ENCODE measurements at regions of chr10 and their contacts with region 1.

Region 1: DNA sequence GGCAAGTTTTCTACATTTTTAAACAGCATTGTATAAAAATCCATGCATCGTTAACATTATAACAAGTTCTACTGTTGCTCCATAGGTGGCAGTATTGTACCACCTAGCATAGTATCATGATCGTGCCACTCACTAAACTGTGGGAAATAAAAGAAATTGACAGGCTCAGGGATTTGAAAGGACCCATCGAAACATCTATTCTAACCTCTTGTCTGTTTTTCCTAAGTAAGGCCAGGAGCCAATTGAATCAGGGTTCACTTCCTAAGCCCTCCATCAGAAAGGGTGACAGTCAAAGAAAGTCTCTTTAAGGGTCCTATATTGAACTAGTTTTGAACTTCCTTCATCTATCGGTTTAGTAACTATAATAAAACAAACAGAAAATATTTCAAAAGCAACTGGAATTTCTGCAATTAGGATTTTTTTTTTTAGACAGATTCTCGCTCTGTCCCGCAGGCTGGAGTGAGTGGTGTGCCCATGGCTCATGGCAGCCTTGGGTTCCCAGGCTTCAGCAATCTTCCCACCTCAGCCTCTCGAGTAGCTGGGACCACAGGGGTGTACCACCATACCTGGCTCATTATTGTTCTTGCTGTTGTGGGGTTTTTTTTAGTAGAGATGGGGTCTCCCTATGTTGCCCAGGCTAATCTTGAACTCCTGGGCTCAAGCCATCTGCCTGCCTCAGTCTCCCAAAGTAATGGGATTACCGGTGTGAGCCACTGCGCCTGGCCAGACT is 9.4 kb downstream of the HACD1 start:
- DNase-seq: no peak
- H3K4me3 ChIP-seq: no peak overlapping the region
- H3K27ac ChIP-seq: no peak overlapping the region
- H3K4me1 ChIP-seq: no peaks in the 10 kb centered on the region
- H3K27me3 ChIP-seq: no peaks in the 10 kb centered on the region
- CTCF ChIP-seq: peak; percentile 62 to 91 (median 78)
- POLR2A ChIP-seq: no peak

Region 2: GRCh38 chr10:17368708-17369272 is 239.0 kb before region 1 on chr10:
- intact Hi-C with region 1: no loop called
- DNase-seq: no peak
- H3K4me3 ChIP-seq: no peak overlapping the region
- H3K27ac ChIP-seq: no peak overlapping the region
- H3K4me1 ChIP-seq: no peaks in the 10 kb centered on the region
- H3K27me3 ChIP-seq: no peaks in the 10 kb centered on the region
- CTCF ChIP-seq: no peak
- POLR2A ChIP-seq: no peak

Region 3: GRCh38 chr10:17747883-17748550 is 140.2 kb after region 1 on chr10:
- intact Hi-C with region 1: loop called (anchors 5 kb)
- DNase-seq: no peak
- H3K4me3 ChIP-seq: no peak overlapping the region
- H3K27ac ChIP-seq: no peak overlapping the region
- H3K4me1 ChIP-seq: peaks cover 0 to 3% (median 0%) of the 10 kb centered on the region in 3 donors
- H3K27me3 ChIP-seq: no peaks in the 10 kb centered on the region
- CTCF ChIP-seq: no peak
- POLR2A ChIP-seq: no peak

Region 4: DNA sequence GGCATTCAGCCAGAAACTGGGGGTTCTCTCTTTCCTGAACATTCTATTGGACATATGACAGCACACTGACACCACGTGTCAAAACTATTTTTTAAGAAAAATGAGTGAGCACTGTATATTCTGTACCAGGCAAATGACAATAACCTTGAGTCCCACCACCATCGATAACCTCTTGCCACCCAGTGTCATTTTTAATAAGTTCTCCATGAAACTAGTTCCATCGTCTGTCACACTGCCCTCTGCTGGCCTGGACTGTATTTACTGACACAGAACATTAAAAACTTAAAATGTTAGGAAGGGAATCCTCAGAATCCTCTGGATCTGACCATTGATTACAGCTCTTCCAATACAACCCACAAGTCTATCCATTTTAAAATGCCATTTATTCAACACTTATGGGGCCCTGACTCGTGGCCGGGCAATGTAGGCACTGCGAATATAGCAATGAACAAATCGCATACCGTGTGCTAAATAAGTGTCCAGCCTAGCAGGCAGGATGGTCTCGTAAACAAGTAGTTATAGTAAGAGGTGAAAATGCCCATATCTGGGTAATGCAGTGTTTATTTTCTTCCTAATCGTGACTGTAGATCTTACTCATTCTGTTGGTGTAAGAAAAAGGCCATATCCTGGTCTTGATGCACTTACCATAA is 496.6 kb after region 1 on chr10:
- intact Hi-C with region 1: loop called (anchors 10 kb)
- DNase-seq: no peak
- H3K4me3 ChIP-seq: no peak overlapping the region
- H3K27ac ChIP-seq: no peak overlapping the region
- H3K4me1 ChIP-seq: no peaks in the 10 kb centered on the region
- H3K27me3 ChIP-seq: no peaks in the 10 kb centered on the region
- CTCF ChIP-seq: peak in 5 of 6 experiments; percentile 28 to 56 (median 53)
- POLR2A ChIP-seq: no peak